Esophagus squamous epithelium (tissue), 5 donors: ENCODE measurements at regions of chr16 and their contacts with region 1.

Region 1: GRCh38 chr16:9159839-9160550 is 68.6 kb downstream of the HAPSTR1 start:
- DNase-seq: no peak
- H3K4me3 ChIP-seq: no peak overlapping the region
- H3K27ac ChIP-seq: no peak overlapping the region
- H3K4me1 ChIP-seq: peaks cover 0 to 7% (median 0%) of the 10 kb centered on the region in 3 donors
- H3K27me3 ChIP-seq: peaks cover 0 to 31% (median 0%) of the 10 kb centered on the region in 4 donors
- CTCF ChIP-seq: peak in 5 of 6 experiments; percentile 47 to 81 (median 58)
- POLR2A ChIP-seq: no peak

Region 2: GRCh38 chr16:9033125-9033830 is 126.7 kb before region 1 on chr16:
- intact Hi-C with region 1: no loop called
- DNase-seq: no peak
- H3K4me3 ChIP-seq: no peak overlapping the region
- H3K27ac ChIP-seq: no peak overlapping the region
- H3K4me1 ChIP-seq: peaks cover 0 to 5% (median 4%) of the 10 kb centered on the region in 3 donors
- H3K27me3 ChIP-seq: no peaks in the 10 kb centered on the region
- CTCF ChIP-seq: peak in 5 of 6 experiments; percentile 30 to 54 (median 41)
- POLR2A ChIP-seq: no peak

Region 3: DNA sequence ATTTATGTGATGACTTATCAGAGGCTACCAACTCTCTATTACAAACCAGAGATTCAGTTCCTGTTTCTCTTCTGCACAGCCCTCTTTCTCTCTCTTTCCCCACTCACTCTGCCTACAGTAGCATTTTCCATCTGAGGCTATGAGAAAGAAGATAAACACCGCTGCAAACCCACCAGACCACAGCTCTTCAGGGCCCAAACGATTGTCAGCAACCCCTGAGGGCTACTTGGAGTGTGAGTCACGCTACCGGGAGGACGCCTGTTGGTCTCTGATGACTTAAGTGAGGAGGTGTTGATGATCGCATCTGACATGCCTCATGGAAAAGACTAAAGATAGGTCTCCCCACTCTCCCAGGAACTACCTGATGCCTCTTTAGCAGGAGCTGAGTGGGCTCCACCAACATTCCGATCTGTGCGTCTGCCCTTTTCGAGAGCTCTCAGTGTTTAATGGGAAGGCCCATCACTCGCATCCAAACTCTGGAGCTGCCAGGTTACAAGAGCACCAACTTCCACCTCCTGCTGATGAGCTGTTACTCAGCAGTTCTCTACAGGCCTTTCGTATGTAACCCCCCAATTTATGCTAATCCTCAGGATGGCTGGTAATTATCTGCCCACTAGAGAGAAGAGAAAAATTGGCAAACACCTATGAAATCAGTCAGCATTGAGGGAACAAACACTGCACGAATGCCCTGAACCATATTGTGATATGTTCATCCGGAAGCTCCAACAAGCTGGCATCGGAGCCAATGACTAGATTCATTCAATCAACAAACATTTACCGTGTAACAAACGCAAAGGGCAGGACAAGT is 1013.1 kb after region 1 on chr16:
- intact Hi-C with region 1: loop called (anchors 10 kb)
- DNase-seq: no peak
- H3K4me3 ChIP-seq: no peak overlapping the region
- H3K27ac ChIP-seq: no peak overlapping the region
- H3K4me1 ChIP-seq: peaks cover 0 to 6% (median 0%) of the 10 kb centered on the region in 3 donors
- H3K27me3 ChIP-seq: peaks cover 0 to 5% (median 0%) of the 10 kb centered on the region in 4 donors
- CTCF ChIP-seq: no peak
- POLR2A ChIP-seq: no peak